ENCODE measurements at regions of chr9 and their contacts with region 1.

Region 1: DNA sequence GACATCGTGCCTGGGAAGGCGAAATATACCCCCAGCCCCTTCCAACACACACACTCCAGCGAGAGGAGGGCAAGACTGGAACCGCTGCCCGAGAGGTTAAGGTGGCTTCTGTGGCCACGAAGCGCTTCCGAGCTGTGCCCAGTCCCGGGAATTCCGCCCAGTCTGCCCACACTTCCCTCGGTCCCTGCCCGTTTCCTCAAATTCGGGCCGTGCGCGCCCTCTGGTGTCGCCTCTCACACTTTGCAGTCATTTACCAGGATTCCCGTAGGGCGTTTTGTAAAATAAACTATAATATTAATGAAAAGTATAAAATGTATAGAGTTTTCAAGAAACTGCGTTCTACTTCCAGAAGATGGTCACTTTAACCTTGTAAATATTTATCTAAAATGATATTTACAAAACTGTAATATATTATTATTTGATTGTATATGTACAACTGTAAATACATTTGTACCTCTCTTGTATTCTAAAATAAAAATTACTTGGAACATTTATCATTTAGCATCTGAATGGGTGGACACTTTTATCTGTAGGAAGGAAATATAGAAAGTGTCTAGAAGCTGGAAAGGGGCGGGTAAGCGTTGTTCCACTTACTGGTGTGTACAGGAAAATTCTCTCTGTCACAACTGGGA is 11.0 kb upstream of the EXOSC2 start:
- DNase-seq: peak; percentile 86
- ATAC-seq: peak; percentile 85

Region 2: DNA sequence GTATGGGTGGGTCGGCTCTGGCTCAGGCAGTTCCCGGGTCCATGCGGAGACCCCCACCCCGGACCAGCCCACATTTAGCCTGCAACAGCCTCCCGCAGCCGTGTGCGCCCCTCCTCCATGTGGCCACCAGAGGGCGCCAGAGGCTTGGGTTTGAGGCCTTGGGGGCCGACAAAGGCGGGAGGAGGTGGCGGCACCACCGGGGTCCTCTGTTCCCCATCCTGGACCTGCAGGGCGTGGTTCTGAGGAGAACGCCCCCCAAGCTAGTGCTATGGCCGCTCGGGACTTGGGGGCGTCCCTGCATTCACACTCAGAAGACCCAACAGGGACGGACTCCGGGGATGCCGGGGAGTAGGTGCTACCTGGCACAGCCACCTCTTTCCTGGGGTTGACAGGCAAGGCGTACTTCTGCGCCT is 221.4 kb before region 1 on chr9:
- intact Hi-C with region 1: loop called (anchors 1 kb)
- DNase-seq: peak; percentile 71
- ATAC-seq: peak; percentile 70